Calu3 (cell line): ENCODE measurements at regions of chr12 and their contacts with region 1.

Region 1: DNA sequence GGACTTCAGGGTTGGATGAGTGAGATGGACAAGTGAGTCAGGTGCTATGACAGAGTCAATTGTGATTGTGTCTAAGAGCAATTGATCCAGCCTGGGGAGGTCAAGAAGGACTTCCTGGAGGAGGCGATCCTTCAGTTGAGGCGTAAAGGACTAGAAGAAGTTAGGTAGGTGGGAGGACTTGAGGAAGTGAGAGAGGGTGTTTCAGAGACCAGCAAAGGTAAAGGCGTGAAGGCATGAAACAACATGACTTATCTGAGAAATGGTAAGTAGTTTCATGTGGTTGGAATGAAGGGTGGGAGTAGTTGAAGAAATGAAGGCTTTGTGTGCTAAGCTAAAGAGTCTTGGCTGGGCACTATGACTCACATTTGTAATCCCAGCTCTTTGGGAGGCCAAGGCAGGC is 48.9 kb upstream of the PPP1CC start:
- DNase-seq: peak; percentile 48
- H3K4me3 Mint-ChIP-seq: no peak overlapping the region
- H3K27ac Mint-ChIP-seq: peak overlapping the region; percentile 9
- H3K4me1 Mint-ChIP-seq: peaks cover 13% of the 10 kb centered on the region
- H3K27me3 Mint-ChIP-seq: no peaks in the 10 kb centered on the region
- CTCF ChIP-seq: no peak

Region 2: DNA sequence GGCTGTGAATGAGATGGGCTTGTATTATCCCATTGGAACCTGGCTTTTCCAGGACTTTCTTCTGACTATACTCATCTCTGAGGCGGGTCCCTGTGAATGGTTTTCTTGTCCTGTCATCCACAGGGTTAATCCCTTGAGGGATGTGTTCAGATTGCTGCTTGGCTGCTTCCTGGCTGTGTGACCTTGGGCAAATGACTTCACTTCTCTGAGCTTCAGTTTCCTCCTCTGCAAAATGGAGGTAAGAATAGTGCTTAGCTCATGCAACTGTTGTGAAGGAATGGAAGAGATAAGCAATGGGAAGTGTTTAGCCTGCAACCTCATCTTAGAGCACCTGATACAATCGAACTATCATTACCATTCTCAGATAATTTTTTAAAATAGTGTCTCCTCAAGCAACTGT is 16.8 kb before region 1 on chr12:
- CTCF ChIA-PET with region 1: interaction called, 11 read pairs
- intact Hi-C with region 1: no loop called
- DNase-seq: no peak
- H3K4me3 Mint-ChIP-seq: no peak overlapping the region
- H3K27ac Mint-ChIP-seq: no peak overlapping the region
- H3K4me1 Mint-ChIP-seq: peaks cover 9% of the 10 kb centered on the region
- H3K27me3 Mint-ChIP-seq: no peaks in the 10 kb centered on the region
- CTCF ChIP-seq: no peak